Activated CD4-positive, alpha-beta memory T cell treated with anti-CD3 and anti-CD28 coated beads for 36 hours (primary cell): ENCODE measurements at regions of chr6 and their contacts with region 1.

Region 1: DNA sequence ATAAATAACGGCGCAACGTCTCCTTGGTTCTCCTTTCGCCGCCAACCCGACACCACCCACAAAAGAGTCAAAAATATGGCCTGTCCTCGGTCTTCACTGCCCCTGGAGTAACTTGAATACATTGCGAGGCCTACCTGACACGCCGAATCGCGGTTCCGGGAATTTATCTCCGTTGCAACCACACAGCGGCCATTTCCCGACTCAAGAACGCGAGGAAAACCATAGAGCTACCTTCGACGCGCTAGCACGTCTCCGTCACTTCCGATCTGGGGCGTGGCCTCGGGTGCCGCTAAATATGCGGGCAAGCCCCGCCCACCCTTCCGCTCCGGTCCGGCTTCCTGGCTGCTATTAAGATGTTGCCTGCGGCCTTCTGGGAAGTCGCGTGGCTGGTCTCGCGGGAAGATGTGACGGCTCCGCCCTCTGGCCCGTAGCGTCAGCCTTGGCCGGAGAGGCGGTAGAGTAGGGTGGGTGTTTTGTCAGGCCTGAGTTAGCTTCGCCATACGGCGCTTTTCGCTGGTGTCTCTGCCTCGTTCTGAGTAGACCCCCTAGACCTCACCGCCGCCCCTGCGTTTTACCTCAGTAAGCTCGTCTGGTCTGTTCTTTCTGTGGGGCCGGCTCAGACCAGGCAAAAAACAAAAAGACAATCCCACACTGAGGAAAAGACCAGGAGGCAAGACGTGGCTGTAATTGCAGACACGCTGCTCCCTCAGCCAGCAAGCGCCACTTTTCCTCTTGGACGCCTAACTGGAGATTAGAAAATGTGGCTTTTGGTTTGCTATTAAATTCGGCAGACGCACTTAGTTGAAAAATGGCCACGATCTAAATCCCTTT is at the start of gene BCLAF1:
- DNase-seq: peak; percentile 99
- H3K4me3 Mint-ChIP-seq: peak within 1 kb of the TSS; percentile 94
- H3K27ac Mint-ChIP-seq: peak within 1 kb of the TSS; percentile 100
- H3K4me1 Mint-ChIP-seq: peaks cover 39% of the 10 kb centered on the region
- H3K27me3 Mint-ChIP-seq: no peaks in the 10 kb centered on the region
- total RNA-seq, gene BCLAF1: 103 to 107 TPM

Region 2: DNA sequence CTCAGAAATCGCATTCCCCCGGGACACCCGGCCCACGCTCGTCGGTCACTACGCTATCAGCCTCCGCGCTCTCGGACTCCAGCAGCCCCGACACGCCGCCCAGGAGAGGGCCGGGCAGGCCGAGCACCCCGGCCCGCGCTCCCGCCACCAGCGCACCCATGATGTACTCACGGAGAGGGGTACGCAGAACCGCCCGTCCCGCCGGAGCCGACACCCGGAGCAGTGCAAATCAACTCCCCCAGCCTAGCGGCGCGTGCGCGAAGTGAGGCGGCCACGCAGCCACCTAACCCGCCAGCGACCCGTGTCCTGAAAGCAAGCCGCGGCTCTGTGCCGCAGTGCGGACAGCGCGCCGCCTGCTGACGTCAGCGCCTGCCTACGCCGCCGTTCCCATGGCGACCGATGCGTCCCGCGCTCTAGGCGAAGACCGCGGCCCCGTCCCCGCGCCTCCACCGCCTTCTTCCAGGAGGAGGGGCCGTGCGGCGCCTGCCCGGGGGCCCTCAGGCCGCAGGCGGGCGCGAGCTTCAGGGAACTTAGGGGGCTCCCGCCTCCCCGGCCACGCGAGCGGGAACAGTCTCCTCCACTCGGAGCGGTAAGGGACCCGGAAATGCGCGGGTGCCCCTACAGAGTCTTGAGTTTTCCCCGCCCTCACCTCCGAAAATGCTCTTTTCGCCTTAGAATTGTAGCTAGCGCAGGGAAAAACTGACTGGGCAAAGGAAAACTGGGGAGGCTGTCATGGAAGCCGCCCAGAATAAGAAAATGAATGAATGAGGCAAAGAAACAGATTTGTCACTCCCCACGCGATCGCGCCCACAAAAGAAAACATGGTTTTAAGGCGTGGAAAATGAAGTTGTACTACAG is 792.2 kb before region 1 on chr6 and contains the start of gene AHI1:
- CTCF ChIA-PET with region 1: interaction called, 4 read pairs
- POLR2A ChIA-PET with region 1: interaction called, 23 read pairs
- intact Hi-C with region 1: loop called (anchors 1 kb)
- DNase-seq: peak; percentile 90
- H3K4me3 Mint-ChIP-seq: peak within 1 kb of the TSS; percentile 9
- H3K27ac Mint-ChIP-seq: no peak within 1 kb of the TSS
- H3K4me1 Mint-ChIP-seq: peaks cover 10% of the 10 kb centered on the region
- H3K27me3 Mint-ChIP-seq: no peaks in the 10 kb centered on the region
- total RNA-seq, gene AHI1: 18.6 to 22.7 TPM

Region 3: DNA sequence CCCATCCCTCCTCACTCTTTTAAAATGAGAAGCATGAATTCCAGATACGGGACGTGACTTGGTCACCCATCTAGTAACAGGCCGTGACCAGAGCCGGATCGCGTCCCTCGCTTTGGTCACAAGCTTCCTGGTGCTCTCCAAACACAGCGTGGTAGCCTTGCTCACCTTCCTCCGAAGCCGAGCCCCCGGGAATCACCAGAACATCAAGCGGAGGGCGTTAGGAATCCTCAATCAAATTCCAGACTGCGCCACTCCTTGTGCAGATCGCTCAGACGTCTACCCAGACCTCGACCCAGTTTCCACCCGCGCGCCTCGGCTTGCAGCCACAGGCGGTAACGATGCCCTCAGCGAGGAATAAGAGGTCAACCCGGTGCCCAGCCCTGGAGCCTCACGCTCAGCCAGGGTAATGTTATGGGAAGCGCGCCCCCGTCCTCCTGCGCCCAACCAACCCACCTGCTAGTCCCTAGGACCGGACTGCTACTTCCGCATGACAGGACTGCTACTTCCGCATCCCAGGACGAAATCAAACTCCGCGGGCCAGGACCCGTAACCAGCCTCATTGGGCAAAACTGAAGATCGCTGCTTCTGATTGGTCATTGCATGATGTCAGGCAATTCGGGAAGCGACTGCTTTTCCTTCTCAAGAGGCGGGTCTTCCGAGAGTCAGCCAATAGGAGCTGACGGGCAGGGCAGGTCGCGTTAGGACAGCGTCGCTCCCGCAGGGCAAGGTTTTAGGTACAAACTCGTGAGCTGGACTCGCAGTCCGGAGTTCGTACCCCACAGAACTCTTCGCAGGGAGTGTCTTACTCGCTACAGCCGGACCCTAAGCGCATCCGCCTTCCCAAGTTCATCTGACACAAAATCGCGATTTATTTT is 39.7 kb before region 1 on chr6 and contains the start of gene MTFR2:
- CTCF ChIA-PET with region 1: interaction called, 15 read pairs
- POLR2A ChIA-PET with region 1: interaction called, 85 read pairs
- intact Hi-C with region 1: loop called (anchors 1 kb)
- DNase-seq: peak; percentile 96
- H3K4me3 Mint-ChIP-seq: peak within 1 kb of the TSS; percentile 88
- H3K27ac Mint-ChIP-seq: peak within 1 kb of the TSS; percentile 76
- H3K4me1 Mint-ChIP-seq: peaks cover 42% of the 10 kb centered on the region
- H3K27me3 Mint-ChIP-seq: no peaks in the 10 kb centered on the region
- total RNA-seq, gene MTFR2: 24.2 to 25.2 TPM

Region 4: GRCh38 chr6:136317021-136317694 is 27.4 kb after region 1 on chr6:
- CTCF ChIA-PET with region 1: interaction called, 14 read pairs
- POLR2A ChIA-PET with region 1: interaction called, 3 read pairs
- intact Hi-C with region 1: loop called (anchors 2 kb)
- DNase-seq: peak; percentile 69
- H3K4me3 Mint-ChIP-seq: no peak overlapping the region
- H3K27ac Mint-ChIP-seq: no peak overlapping the region
- H3K4me1 Mint-ChIP-seq: no peaks in the 10 kb centered on the region
- H3K27me3 Mint-ChIP-seq: no peaks in the 10 kb centered on the region

Region 5: DNA sequence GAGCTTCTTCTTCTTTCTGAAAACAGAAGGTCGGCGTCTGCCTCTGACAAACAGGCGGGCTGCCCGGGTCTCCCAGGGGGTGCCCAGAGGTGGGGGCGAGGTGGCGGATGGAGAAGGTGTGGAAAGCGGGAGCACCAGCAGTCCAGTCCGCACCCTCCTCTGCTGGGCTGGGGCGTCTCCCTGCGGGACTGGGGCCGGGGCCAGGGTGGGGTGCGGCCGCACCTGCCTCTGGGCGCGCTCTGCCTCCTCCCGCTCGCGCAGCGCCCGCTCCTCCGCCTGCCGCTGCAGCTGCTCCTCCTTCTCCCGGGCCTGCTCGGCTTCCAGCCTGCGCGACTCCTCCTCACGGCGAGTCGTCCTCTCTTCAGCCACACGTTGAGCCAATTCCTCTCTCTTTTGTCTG is 71.0 kb after region 1 on chr6:
- CTCF ChIA-PET with region 1: no interaction called
- POLR2A ChIA-PET with region 1: no interaction called
- intact Hi-C with region 1: no loop called
- DNase-seq: no peak
- H3K4me3 Mint-ChIP-seq: no peak overlapping the region
- H3K27ac Mint-ChIP-seq: no peak overlapping the region
- H3K4me1 Mint-ChIP-seq: peaks cover 2% of the 10 kb centered on the region
- H3K27me3 Mint-ChIP-seq: no peaks in the 10 kb centered on the region

Region 6: DNA sequence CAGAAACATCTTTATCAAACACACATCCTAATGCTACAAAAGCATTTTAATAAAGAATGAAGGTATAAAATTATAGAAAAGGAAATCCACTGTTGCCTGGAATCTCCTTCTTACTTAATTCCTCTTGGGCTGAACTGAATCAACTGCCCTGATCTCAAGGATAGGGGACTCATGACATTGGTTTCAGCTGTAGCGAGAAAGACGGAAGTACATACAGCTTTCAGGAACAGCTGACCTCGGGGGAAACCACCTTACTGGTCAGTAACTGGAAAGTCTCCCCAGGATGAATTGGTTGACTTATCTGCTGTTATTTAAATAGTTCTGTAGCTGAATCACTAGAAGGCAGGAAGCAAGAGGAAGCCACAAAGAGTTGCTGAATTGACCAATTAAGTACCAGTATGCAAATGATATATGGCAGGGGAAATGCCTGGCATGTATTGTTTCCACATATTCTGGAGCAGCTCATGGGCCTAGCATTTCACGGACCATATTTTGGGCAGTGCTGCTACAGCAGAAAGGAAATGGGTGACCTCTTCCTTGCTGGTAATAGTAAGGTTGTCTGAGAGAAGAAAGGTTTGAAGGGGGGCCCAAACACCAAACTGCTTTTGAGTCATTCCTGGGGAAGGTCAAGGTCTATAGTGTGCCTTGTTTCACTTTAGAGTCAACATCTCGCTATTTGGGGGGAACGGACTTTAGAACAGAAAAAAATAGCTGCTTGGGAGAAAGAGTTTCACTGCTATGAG is 304.1 kb after region 1 on chr6:
- CTCF ChIA-PET with region 1: interaction called, 3 read pairs
- POLR2A ChIA-PET with region 1: interaction called, 5 read pairs
- intact Hi-C with region 1: loop called (anchors 2 kb)
- DNase-seq: peak; percentile 79
- H3K4me3 Mint-ChIP-seq: peak overlapping the region; percentile 57
- H3K27ac Mint-ChIP-seq: peak overlapping the region; percentile 89
- H3K4me1 Mint-ChIP-seq: peaks cover 33% of the 10 kb centered on the region
- H3K27me3 Mint-ChIP-seq: no peaks in the 10 kb centered on the region